T-cell (primary cell): ENCODE measurements at regions of chr11 and their contacts with region 1.

Region 1: DNA sequence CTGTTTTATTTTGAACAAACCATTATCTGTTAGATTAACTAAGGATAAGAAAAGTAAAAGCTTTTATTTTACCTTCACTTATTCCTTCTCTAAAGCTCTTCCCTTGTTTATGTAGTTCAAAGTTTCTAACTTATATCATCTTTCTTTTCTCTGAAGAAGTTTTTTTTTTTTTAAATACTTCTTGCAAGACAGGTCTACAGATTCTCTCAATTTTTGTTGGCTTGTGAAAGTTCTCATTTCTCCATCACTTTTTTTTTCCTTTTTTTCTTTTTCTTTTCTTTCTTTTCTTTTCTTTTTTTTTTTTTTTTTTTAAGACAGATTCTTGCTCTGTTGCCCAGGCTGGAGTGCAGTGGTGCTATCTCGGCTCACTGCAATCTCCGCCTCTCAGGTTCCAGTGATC is 4.7 kb upstream of the TREH start:
- DNase-seq: no peak
- ATAC-seq: no peak
- H3K4me3 ChIP-seq: no peak overlapping the region
- H3K4me3 Mint-ChIP-seq: no peak overlapping the region
- H3K27ac ChIP-seq: no peak overlapping the region
- H3K27ac Mint-ChIP-seq: no peak overlapping the region
- H3K4me1 ChIP-seq: peaks cover 0 to 4% of the 10 kb centered on the region in 2 experiments
- H3K4me1 Mint-ChIP-seq: peaks cover 0 to 11% (median 10%) of the 10 kb centered on the region in 3 donors
- H3K27me3 ChIP-seq: peaks cover 0 to 23% of the 10 kb centered on the region in 2 experiments
- H3K27me3 Mint-ChIP-seq: peaks cover 0 to 2% of the 10 kb centered on the region in 2 donors

Region 2: GRCh38 chr11:118744046-118744445 is 59.9 kb after region 1 on chr11:
- CTCF ChIA-PET with region 1: interaction called in 1 of 2 experiments, 3 read pairs
- POLR2A ChIA-PET with region 1: interaction called, 3 to 11 read pairs
- DNase-seq: no peak
- ATAC-seq: peak in 1 of 4 experiments; percentile 2
- H3K4me3 ChIP-seq: no peak overlapping the region
- H3K4me3 Mint-ChIP-seq: no peak overlapping the region
- H3K27ac ChIP-seq: no peak overlapping the region
- H3K27ac Mint-ChIP-seq: peak overlapping the region in 1 of 2 donors; percentile 8
- H3K4me1 ChIP-seq: no peaks in the 10 kb centered on the region
- H3K4me1 Mint-ChIP-seq: peaks cover 0 to 8% (median 2%) of the 10 kb centered on the region in 3 donors
- H3K27me3 ChIP-seq: no peaks in the 10 kb centered on the region
- H3K27me3 Mint-ChIP-seq: no peaks in the 10 kb centered on the region